PC-9 (cell line): ENCODE measurements at regions of chr3 and their contacts with region 1.

Region 1: GRCh38 chr3:87082796-87083440 is 92.0 kb upstream of the VGLL3 start:
- DNase-seq: peak; percentile 17 to 57
- H3K4me3 ChIP-seq: no peak overlapping the region
- H3K27ac ChIP-seq: no peak overlapping the region
- H3K4me1 ChIP-seq: no peaks in the 10 kb centered on the region
- H3K27me3 ChIP-seq: no peaks in the 10 kb centered on the region
- CTCF ChIP-seq: peak; percentile 77

Region 2: GRCh38 chr3:86774082-86774691 is 308.7 kb before region 1 on chr3:
- CTCF ChIA-PET with region 1: interaction called, 4 read pairs
- POLR2A ChIA-PET with region 1: no interaction called
- intact Hi-C with region 1: loop called (anchors 1 kb)
- DNase-seq: peak in 1 of 2 experiments; percentile 44
- H3K4me3 ChIP-seq: no peak overlapping the region
- H3K27ac ChIP-seq: no peak overlapping the region
- H3K4me1 ChIP-seq: no peaks in the 10 kb centered on the region
- H3K27me3 ChIP-seq: no peaks in the 10 kb centered on the region
- CTCF ChIP-seq: peak; percentile 81

Region 3: GRCh38 chr3:86969500-86970189 is 113.3 kb before region 1 on chr3:
- CTCF ChIA-PET with region 1: no interaction called
- POLR2A ChIA-PET with region 1: no interaction called
- intact Hi-C with region 1: loop called (anchors 1 kb)
- DNase-seq: no peak
- H3K4me3 ChIP-seq: no peak overlapping the region
- H3K27ac ChIP-seq: no peak overlapping the region
- H3K4me1 ChIP-seq: peaks cover 12% of the 10 kb centered on the region; the same call in 1 of the 2 replicates
- H3K27me3 ChIP-seq: no peaks in the 10 kb centered on the region
- CTCF ChIP-seq: peak; percentile 84

Region 4: GRCh38 chr3:87006844-87007439 is 76.0 kb before region 1 on chr3:
- CTCF ChIA-PET with region 1: no interaction called
- POLR2A ChIA-PET with region 1: no interaction called
- intact Hi-C with region 1: loop called (anchors 1 kb)
- DNase-seq: peak in 1 of 2 experiments; percentile 34
- H3K4me3 ChIP-seq: no peak overlapping the region
- H3K27ac ChIP-seq: no peak overlapping the region
- H3K4me1 ChIP-seq: peaks cover 12% of the 10 kb centered on the region
- H3K27me3 ChIP-seq: no peaks in the 10 kb centered on the region
- CTCF ChIP-seq: peak; percentile 51

Region 5: GRCh38 chr3:87247430-87247773 is 164.5 kb after region 1 on chr3:
- CTCF ChIA-PET with region 1: no interaction called
- POLR2A ChIA-PET with region 1: no interaction called
- intact Hi-C with region 1: no loop called
- DNase-seq: no peak
- H3K4me3 ChIP-seq: no peak overlapping the region
- H3K27ac ChIP-seq: no peak overlapping the region
- H3K4me1 ChIP-seq: no peaks in the 10 kb centered on the region
- H3K27me3 ChIP-seq: no peaks in the 10 kb centered on the region
- CTCF ChIP-seq: no peak

Region 6: GRCh38 chr3:88003115-88003755 is 920.3 kb after region 1 on chr3:
- CTCF ChIA-PET with region 1: no interaction called
- POLR2A ChIA-PET with region 1: no interaction called
- intact Hi-C with region 1: loop called (anchors 10 kb)
- DNase-seq: peak in 1 of 2 experiments; percentile 45
- H3K4me3 ChIP-seq: no peak overlapping the region
- H3K27ac ChIP-seq: no peak overlapping the region
- H3K4me1 ChIP-seq: no peaks in the 10 kb centered on the region
- H3K27me3 ChIP-seq: no peaks in the 10 kb centered on the region
- CTCF ChIP-seq: peak; percentile 90